Activated CD4-positive, alpha-beta memory T cell treated with anti-CD3 and anti-CD28 coated beads for 36 hours (primary cell): ENCODE measurements at regions of chr10 and their contacts with region 1.

Region 1: DNA sequence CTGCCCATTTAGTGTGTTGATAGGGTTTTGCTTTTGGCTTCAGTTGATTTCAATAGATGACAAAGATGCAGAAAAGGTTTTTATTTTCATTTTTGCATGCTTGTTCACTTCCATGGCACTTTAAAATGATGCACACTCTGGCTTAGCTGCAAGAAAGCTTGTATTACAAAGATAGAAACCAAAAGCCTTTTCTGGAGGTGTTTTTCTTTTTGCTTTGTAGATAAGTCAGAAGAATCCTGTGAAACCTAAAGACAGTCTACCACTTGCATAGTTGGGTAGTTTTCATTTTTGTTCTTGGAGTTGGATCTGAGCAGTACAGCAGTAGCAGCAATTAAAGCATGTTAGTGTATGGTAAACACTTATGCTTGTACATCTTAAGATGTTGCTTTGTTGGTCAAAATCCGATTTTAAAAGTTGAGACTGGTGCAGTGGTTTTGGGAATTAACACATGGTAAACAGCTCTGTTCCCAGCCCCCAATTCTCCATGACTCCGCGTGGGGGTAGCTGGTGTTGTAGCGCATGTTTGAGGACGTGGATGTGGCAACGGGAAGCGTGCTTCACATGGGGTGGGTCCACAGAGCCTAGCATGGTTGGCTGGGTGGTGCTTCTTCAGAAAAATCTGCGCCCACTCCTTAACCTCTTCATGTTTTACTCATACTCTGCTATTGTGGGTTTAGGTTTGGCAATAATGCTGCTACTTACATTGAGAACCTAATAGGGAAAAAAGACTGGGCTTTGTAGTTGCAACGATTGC is 19.8 kb downstream of the CCNY start:
- DNase-seq: peak; percentile 69
- H3K4me3 Mint-ChIP-seq: peak overlapping the region; percentile 63
- H3K27ac Mint-ChIP-seq: peak overlapping the region; percentile 94
- H3K4me1 Mint-ChIP-seq: peaks cover 77% of the 10 kb centered on the region
- H3K27me3 Mint-ChIP-seq: no peaks in the 10 kb centered on the region

Region 2: GRCh38 chr10:35328404-35329037 is 27.6 kb before region 1 on chr10:
- CTCF ChIA-PET with region 1: interaction called, 3 read pairs
- POLR2A ChIA-PET with region 1: no interaction called
- intact Hi-C with region 1: loop called (anchors 1 kb)
- DNase-seq: no peak
- H3K4me3 Mint-ChIP-seq: no peak overlapping the region
- H3K27ac Mint-ChIP-seq: peak overlapping the region; percentile 51
- H3K4me1 Mint-ChIP-seq: peaks cover 47% of the 10 kb centered on the region
- H3K27me3 Mint-ChIP-seq: no peaks in the 10 kb centered on the region

Region 3: GRCh38 chr10:35341521-35341920 is 14.6 kb before region 1 on chr10:
- CTCF ChIA-PET with region 1: interaction called, 5 read pairs
- POLR2A ChIA-PET with region 1: interaction called, 15 read pairs
- intact Hi-C with region 1: loop called (anchors 1 kb)
- DNase-seq: no peak
- H3K4me3 Mint-ChIP-seq: no peak overlapping the region
- H3K27ac Mint-ChIP-seq: peak overlapping the region; percentile 10
- H3K4me1 Mint-ChIP-seq: peaks cover 71% of the 10 kb centered on the region
- H3K27me3 Mint-ChIP-seq: no peaks in the 10 kb centered on the region

Region 4: DNA sequence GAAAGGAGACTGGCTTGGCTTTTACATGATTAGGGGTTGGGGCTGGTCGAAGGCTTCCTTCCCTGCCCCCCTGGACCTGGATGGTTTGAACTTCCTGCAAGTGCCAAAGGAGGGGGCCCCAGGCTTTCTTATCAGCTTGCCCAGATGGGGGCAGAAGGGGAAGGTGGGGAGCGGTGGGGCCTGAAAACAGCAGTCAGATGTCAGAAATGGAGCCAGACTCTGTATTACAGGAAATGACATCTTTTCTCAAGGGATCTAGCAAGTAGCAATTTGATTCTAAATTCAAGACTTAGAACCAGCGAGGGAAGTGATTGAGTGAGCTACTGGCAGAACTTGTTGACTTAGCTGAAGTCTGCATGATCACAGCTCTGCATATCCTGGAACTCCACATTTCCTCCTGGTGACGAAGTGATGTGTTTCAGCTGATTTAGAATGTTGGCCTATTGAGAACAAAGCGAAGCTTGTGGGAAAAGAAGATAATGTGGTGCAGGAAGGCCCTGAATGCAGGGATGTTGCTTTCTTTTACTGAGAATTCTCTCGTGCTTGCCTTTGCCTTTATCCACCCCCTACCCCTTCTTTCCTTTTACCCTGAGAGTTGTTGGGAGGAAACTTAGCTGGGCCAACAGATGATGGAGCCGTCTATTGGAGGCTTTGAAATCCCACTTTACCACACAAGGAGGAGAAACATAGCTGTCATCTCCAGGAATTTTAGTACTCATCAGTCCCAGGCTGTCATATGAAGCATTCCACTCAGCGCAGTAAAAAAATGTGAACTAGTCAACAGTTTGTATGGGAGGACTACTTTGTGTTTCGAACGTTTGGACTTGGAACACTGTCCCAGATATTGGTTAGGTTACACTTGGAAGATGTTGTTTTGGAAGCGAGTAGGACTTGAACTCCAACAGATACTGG is 23.3 kb after region 1 on chr10:
- CTCF ChIA-PET with region 1: no interaction called
- POLR2A ChIA-PET with region 1: interaction called, 5 read pairs
- intact Hi-C with region 1: loop called (anchors 1 kb)
- DNase-seq: peak; percentile 19
- H3K4me3 Mint-ChIP-seq: no peak overlapping the region
- H3K27ac Mint-ChIP-seq: no peak overlapping the region
- H3K4me1 Mint-ChIP-seq: peaks cover 68% of the 10 kb centered on the region
- H3K27me3 Mint-ChIP-seq: no peaks in the 10 kb centered on the region

Region 5: GRCh38 chr10:35412900-35413491 is 56.8 kb after region 1 on chr10:
- CTCF ChIA-PET with region 1: no interaction called
- POLR2A ChIA-PET with region 1: interaction called, 5 read pairs
- intact Hi-C with region 1: loop called (anchors 2 kb)
- DNase-seq: no peak
- H3K4me3 Mint-ChIP-seq: no peak overlapping the region
- H3K27ac Mint-ChIP-seq: no peak overlapping the region
- H3K4me1 Mint-ChIP-seq: peaks cover 44% of the 10 kb centered on the region
- H3K27me3 Mint-ChIP-seq: no peaks in the 10 kb centered on the region